ENCODE measurements at regions of chr16 and their contacts with region 1.

Region 1: GRCh38 chr16:54286090-54286993 is at the start of gene IRX3:
- DNase-seq: peak; percentile 94

Region 2: GRCh38 chr16:54817446-54817845 is 531.1 kb after region 1 on chr16:
- in situ Hi-C with region 1: no loop called
- DNase-seq: peak; percentile 26

Region 3: DNA sequence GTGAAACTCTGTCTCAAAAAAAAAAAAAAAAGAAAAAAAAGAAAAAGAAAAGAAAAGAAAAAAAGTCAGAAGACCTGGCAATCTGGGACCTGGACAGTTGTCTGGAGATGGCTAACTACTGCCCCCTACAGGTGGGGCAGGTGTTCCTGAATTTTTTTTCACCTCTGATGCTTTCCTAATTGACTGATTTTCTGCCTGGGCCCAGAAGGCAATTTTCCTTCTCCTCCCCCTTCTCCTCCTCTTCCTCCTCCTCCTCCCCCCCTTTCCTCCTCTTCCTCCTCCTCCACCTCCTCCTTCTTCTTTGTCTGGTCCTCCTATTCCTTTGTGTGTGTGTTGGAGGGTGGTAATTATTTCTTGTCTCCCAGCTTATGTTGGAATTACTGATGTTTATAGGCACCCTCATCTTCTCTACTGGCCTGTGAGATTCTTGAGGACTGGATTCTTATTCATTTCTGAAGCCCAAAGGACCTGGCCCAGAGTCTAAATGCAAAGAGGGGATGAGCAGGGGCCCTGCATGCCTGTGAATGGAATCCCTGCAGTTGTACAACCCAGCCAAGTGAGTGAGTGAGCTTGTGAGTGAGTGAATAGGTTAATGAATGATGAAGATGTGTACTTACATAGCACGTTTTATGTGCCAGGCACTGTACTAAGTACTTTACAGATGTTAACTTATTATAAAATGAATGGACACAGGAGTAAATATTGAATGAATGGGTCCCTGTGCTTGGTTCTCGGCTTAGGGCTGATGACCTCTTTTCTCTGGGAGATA is 671.2 kb after region 1 on chr16:
- in situ Hi-C with region 1: loop called (anchors 25 kb)
- DNase-seq: peak; percentile 80